ENCODE measurements at regions of chr7 and their contacts with region 1.

Region 1: GRCh38 chr7:101077303-101078089 is 7.8 kb upstream of the TRIM56 start:
- DNase-seq: peak; percentile 96
- ATAC-seq: peak; percentile 99
- H3K4me3 Mint-ChIP-seq: no peak overlapping the region
- H3K27ac Mint-ChIP-seq: no peak overlapping the region
- H3K4me1 Mint-ChIP-seq: peaks cover 8% of the 10 kb centered on the region; the same call in 1 of the 2 replicates
- H3K27me3 Mint-ChIP-seq: no peaks in the 10 kb centered on the region
- CTCF ChIP-seq: peak; percentile 90

Region 2: DNA sequence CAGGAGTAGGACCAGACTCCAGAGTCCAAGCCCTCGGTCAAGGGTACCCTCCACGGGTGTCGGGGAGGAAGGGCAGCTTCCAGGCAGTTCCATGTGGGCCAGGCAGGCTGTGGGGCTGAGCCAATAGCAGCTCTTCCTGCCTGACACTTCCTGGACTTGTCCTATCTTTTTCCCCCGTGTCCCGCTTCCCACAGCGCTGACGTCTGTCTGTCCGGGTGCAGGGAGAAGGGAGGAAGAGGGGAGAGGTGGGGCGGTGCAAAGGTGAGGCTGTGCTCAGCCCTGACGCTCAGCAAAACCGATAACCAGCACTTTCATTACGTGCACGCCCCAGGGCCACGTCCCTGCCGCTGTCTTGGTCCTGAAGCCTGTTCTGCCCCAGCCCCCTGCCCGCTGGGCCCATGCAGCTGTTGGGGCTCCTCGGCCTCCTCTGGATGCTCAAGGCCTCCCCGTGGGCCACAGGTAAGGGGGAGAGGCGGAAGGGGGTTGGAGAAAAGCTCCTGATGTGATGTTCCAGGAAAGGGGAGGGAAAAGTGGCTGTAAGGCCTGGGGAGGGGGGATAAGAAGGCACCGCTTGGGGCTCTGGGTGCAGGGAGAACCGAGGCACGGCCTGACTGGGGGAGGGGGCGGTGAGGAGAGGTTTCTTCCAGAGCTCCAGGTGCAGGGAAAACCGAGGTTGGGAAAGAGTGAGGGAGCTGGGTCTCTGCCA is 128.1 kb before region 1 on chr7 and contains the start of gene MUC3A:
- CTCF ChIA-PET with region 1: interaction called, 10 read pairs
- POLR2A ChIA-PET with region 1: no interaction called
- DNase-seq: peak; percentile 46
- ATAC-seq: peak; percentile 25
- H3K4me3 Mint-ChIP-seq: peak within 1 kb of the TSS; percentile 18; the same call in 1 of the 2 replicates
- H3K27ac Mint-ChIP-seq: no peak within 1 kb of the TSS
- H3K4me1 Mint-ChIP-seq: peaks cover 40% of the 10 kb centered on the region
- H3K27me3 Mint-ChIP-seq: no peaks in the 10 kb centered on the region; the same call in 1 of the 2 replicates
- CTCF ChIP-seq: no peak
- total RNA-seq, gene MUC3A: 50.6 to 74.8 TPM (median 67.2 TPM) in 3 replicates

Region 3: GRCh38 chr7:101017064-101017777 is 60.3 kb before region 1 on chr7:
- CTCF ChIA-PET with region 1: interaction called, 12 read pairs
- POLR2A ChIA-PET with region 1: no interaction called
- DNase-seq: peak; percentile 56
- ATAC-seq: peak; percentile 52
- H3K4me3 Mint-ChIP-seq: peak overlapping the region; percentile 78
- H3K27ac Mint-ChIP-seq: no peak overlapping the region
- H3K4me1 Mint-ChIP-seq: peaks cover 21% of the 10 kb centered on the region
- H3K27me3 Mint-ChIP-seq: peaks cover 3% of the 10 kb centered on the region; the same call in 1 of the 2 replicates
- CTCF ChIP-seq: no peak

Region 4: DNA sequence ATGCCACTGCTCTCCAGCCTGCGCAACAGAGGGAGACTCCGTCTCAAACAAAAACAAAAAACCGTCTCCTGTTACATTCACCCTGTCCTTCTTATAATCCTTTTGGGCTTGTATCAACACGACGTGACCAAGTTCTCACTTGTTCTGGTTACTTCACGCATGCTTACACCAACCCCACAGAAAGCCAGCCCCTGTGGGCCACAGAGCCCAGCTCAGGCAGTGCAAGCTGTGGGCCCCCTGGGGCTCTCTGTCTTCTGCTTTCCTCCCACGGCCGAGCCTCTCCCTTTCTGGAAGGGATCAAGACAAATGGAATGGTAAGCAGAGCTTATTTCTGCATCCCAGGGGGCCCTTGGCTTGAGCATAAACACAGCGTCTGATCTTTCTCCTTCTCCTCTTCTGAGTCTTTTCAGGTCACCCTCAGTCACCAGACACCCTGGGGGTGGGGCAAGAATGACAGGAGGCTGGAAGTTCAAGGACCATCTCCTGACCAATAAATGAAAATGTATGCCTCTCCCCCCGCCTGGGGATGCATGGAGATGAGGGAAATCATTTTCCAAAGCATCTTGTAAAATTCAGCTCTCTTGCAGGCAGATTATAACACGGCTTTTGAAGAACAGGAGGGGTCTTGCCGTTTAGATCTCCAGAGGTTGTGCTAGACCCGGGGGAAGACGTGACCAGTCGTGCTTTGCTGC is 11.2 kb before region 1 on chr7:
- CTCF ChIA-PET with region 1: interaction called, 16 read pairs
- POLR2A ChIA-PET with region 1: no interaction called
- DNase-seq: no peak
- ATAC-seq: no peak
- H3K4me3 Mint-ChIP-seq: no peak overlapping the region
- H3K27ac Mint-ChIP-seq: no peak overlapping the region
- H3K4me1 Mint-ChIP-seq: peaks cover 9% of the 10 kb centered on the region
- H3K27me3 Mint-ChIP-seq: peaks cover 4% of the 10 kb centered on the region
- CTCF ChIP-seq: no peak

Region 5: DNA sequence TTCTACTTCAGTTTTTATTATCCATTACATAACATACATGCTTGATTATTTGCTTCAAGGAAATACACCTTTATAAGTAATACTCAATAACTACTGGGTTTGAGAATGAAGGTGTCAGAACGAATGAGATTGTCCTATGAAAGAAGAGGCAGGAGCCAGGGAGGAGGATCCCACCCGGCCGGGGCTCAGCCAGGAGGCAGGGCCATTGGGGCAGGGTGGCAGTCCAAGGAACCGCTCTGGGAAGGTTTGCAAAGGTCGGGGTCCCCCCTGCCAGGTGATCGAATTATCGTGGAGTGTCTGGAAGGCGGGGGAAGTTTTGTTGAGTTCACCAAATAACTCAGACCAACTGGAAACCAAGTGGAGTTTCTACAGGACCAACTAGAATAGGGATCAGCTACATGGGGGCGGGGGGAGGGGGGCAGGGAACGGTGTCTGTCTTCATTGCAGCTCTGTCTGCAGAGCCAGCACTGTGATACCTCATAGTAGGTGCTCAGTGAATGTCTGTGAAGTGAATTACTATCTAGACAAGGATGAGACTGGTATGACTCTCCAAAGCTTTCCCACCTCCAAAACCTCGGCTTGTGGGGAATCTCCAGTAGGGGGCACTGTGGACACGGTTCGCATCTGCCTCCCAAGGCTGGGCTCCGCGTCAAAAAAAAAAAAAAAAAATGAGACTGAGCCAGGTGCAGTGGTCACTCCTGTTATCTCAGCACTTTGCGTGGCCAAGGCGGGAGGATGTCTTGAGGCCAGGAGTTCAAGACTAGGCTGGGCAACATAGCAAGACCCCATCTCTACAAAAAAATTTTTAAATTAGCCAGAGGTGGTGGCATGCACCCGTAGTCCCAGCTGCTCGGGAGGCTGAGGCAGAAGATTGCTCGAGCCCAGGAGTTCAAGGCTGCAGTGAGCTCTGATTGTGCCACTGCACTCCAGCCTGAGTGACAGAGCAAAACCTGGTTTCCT is 17.2 kb after region 1 on chr7:
- CTCF ChIA-PET with region 1: interaction called, 15 read pairs
- POLR2A ChIA-PET with region 1: no interaction called
- DNase-seq: peak; percentile 78
- ATAC-seq: peak; percentile 89
- H3K4me3 Mint-ChIP-seq: no peak overlapping the region
- H3K27ac Mint-ChIP-seq: no peak overlapping the region
- H3K4me1 Mint-ChIP-seq: peaks cover 14% of the 10 kb centered on the region
- H3K27me3 Mint-ChIP-seq: no peaks in the 10 kb centered on the region
- CTCF ChIP-seq: peak; percentile 73

Measured in WTC11 (cell line).